Prostate gland (tissue), 2 donors: ENCODE measurements at regions of chr1 and their contacts with region 1.

Region 1: DNA sequence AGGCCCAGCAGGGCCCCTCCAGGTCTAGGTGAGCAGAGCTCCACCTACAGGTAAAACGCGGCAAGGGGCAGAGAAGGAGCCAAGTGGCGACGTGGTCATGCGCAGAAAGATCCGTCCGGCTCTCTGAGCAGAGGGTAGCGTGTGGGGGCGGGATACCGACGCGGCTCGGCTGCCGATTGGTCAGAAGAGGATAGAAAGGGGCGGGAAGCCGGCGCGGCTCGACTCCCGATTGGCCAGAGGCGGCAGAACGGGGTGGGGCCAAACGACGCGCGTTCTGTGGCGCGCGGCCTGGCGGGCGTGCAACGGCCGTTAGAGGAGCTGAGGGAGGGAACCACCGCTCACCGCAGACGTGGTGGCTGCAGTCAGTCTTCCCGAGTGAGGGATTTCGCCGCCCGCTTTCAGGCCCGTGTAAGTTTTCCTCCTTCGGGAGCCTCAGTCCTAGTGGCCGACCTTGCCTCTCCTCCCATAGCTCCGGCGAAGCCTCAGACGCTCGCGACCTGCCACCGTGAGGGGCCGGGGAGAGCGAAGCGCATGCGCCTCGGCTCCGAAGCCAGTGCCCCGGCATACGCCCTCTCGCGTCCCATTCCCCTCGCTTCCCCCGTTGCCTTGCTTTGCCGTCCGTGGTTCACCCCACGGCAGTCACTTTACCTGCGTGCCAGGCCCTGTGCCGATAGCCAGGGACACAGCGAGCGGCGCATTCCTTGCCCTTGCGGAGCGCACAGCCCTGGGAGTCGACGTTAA is at the start of gene CEP85:
- DNase-seq: peak; percentile 98
- H3K4me3 ChIP-seq: peak within 1 kb of the TSS; percentile 57 to 70
- H3K27ac ChIP-seq: peak within 1 kb of the TSS; percentile 84 to 88
- H3K4me1 ChIP-seq: no peaks in the 10 kb centered on the region
- H3K27me3 ChIP-seq: no peaks in the 10 kb centered on the region
- CTCF ChIP-seq: peak; percentile 63 to 96 (median 88)
- POLR2A ChIP-seq: peak; percentile 84
- total RNA-seq, gene CEP85: 3.4 to 21.0 TPM

Region 2: GRCh38 chr1:26094677-26095383 is 139.2 kb before region 1 on chr1:
- intact Hi-C with region 1: no loop called
- DNase-seq: no peak
- H3K4me3 ChIP-seq: no peak overlapping the region
- H3K27ac ChIP-seq: no peak overlapping the region
- H3K4me1 ChIP-seq: no peaks in the 10 kb centered on the region
- H3K27me3 ChIP-seq: no peaks in the 10 kb centered on the region
- CTCF ChIP-seq: no peak
- POLR2A ChIP-seq: no peak

Region 3: GRCh38 chr1:26169669-26170471 is 64.2 kb before region 1 on chr1 and contains the start of gene ZNF593:
- intact Hi-C with region 1: loop called (anchors 2 kb)
- DNase-seq: peak; percentile 87
- H3K4me3 ChIP-seq: peak within 1 kb of the TSS; percentile 75 to 95
- H3K27ac ChIP-seq: peak within 1 kb of the TSS; percentile 68 to 77
- H3K4me1 ChIP-seq: no peaks in the 10 kb centered on the region
- H3K27me3 ChIP-seq: no peaks in the 10 kb centered on the region
- CTCF ChIP-seq: peak; percentile 92 to 99 (median 96)
- POLR2A ChIP-seq: peak; percentile 52
- total RNA-seq, gene ZNF593: 44.5 to 50.7 TPM

Region 4: DNA sequence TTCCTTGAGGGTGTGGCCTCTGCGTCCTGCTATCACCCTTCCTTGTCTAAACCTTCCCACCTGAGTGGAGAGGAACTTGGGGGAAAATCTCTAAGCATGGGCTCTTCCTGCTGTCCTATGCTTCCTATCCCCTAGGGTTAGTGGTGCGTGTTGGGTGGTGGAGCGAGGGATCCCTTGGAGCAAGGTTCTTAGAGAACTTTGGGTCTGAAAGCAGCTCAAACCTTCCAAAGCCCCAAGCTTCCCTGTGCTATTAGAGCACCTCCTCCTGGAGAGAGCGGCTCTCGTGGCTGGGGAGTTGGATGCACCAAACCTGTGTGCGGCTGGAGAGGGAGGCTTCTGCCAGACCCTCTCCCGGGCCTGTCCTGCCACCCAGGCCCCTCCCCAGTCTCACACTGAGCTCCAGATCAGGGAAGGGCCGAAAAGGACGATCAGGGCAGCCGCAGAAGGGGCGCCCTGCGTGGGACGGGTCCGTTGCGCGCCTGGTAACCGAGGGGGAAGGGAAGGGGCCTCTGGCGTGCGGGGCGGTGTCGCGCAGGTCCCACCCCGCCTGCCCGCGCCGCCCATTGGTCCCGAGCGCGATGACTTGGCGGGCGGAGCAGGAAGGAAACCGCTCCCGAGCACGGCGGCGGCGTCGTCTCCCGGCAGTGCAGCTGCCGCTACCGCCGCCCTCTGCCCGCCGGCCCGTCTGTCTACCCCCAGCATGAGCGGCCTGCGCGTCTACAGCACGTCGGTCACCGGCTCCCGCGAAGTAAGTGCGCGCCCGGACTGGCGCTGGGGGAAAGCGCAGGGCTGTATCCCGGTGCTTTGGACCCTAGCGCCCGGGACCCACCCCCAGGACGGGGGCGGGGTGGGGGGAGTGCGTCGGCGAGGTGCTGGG is 45.6 kb after region 1 on chr1 and contains the start of gene SH3BGRL3:
- intact Hi-C with region 1: loop called (anchors 5 kb)
- DNase-seq: peak; percentile 87
- H3K4me3 ChIP-seq: peak within 1 kb of the TSS; percentile 77 to 91
- H3K27ac ChIP-seq: peak within 1 kb of the TSS; percentile 87 to 92
- H3K4me1 ChIP-seq: peaks cover 23% of the 10 kb centered on the region
- H3K27me3 ChIP-seq: no peaks in the 10 kb centered on the region
- CTCF ChIP-seq: peak in 3 of 4 experiments; percentile 11 to 45 (median 36)
- POLR2A ChIP-seq: peak; percentile 99
- total RNA-seq, gene SH3BGRL3: 37.4 to 55.3 TPM

Region 5: DNA sequence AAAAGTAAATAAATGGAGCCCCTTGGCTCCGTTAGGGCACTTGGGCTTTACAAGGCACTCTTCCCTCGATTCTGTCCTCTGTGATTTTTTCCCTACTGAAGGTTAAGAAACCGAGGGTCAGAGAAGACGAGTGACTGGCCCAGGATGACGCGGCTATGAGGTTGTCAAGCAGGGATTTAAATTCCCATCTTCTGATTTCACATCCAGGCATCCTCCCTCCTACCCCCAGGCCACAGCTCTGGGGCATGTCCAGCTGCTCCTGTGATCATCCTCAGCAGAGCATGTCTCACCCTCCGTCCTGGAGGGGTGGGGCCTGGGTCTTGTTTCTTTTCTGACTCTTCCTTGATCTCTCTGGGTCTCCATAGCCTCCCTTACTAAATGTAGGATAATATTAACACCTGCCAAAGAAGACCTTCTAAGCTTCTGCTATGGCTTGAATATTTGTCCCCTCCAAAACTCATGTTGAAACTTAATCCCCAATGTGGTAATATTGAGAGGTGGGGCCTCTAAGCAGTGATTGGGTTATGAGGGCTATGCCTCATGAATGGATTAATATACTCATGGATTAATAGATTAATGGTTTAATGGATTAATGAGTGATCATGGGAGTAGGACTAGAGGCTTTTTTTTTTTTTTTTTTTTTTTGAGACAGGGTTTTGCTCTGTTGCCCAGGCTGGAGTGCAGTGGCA is 115.3 kb after region 1 on chr1:
- intact Hi-C with region 1: no loop called
- DNase-seq: no peak
- H3K4me3 ChIP-seq: no peak overlapping the region
- H3K27ac ChIP-seq: no peak overlapping the region
- H3K4me1 ChIP-seq: peaks cover 5% of the 10 kb centered on the region
- H3K27me3 ChIP-seq: no peaks in the 10 kb centered on the region
- CTCF ChIP-seq: no peak
- POLR2A ChIP-seq: no peak